Activated CD4-positive, alpha-beta memory T cell treated with anti-CD3 and anti-CD28 coated beads for 36 hours (primary cell): ENCODE measurements at regions of chr16 and their contacts with region 1.

Region 1: DNA sequence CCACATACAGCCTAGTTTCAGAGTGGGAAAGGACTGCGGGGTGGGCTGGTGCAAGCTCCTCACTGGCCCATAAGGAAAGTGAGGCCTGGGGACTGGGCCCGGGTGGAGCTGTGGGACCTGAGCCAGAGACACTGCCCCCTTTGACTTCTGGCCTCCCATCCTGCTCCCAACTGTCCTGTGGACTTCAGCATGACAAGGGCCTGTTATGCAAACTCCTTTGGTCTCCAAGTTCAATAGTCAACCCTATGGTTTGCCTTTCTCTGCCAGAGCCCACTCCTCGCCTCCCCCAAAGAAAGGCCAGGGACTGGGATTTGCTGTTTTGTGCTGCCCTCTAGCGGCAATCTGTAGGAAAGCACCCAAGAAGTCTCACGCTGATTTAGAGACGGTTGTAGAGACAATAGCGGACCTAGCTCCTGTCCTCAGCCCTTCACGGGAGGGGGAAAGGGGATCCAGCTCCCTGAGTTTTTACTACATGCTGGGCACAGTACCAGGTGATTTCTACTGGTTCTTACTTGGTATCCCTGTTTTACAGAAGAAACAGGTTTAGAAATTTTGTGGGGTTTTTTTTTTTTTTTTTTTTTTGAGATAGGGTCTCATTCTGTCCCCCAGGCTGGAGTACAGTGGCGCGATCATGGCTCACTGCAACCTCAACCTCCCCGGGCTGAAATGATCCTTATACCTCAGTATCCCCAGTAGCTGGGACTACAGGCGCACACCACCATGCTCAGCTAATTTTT is 1.2 kb upstream of the TLCD3B start:
- DNase-seq: peak; percentile 77
- H3K4me3 Mint-ChIP-seq: no peak overlapping the region
- H3K27ac Mint-ChIP-seq: no peak overlapping the region
- H3K4me1 Mint-ChIP-seq: peaks cover 23% of the 10 kb centered on the region
- H3K27me3 Mint-ChIP-seq: peaks cover 49% of the 10 kb centered on the region

Region 2: GRCh38 chr16:29900102-29900887 is 132.0 kb before region 1 on chr16 and contains the start of gene ASPHD1:
- CTCF ChIA-PET with region 1: interaction called, 12 read pairs
- POLR2A ChIA-PET with region 1: no interaction called
- intact Hi-C with region 1: no loop called
- DNase-seq: peak; percentile 71
- H3K4me3 Mint-ChIP-seq: peak within 1 kb of the TSS; percentile 77
- H3K27ac Mint-ChIP-seq: no peak within 1 kb of the TSS
- H3K4me1 Mint-ChIP-seq: peaks cover 8% of the 10 kb centered on the region
- H3K27me3 Mint-ChIP-seq: peaks cover 18% of the 10 kb centered on the region
- total RNA-seq, gene ASPHD1: 1.6 to 1.9 TPM

Region 3: GRCh38 chr16:29910819-29911675 is 121.2 kb before region 1 on chr16:
- CTCF ChIA-PET with region 1: no interaction called
- POLR2A ChIA-PET with region 1: no interaction called
- intact Hi-C with region 1: no loop called
- DNase-seq: no peak
- H3K4me3 Mint-ChIP-seq: no peak overlapping the region
- H3K27ac Mint-ChIP-seq: no peak overlapping the region
- H3K4me1 Mint-ChIP-seq: no peaks in the 10 kb centered on the region
- H3K27me3 Mint-ChIP-seq: no peaks in the 10 kb centered on the region

Region 4: DNA sequence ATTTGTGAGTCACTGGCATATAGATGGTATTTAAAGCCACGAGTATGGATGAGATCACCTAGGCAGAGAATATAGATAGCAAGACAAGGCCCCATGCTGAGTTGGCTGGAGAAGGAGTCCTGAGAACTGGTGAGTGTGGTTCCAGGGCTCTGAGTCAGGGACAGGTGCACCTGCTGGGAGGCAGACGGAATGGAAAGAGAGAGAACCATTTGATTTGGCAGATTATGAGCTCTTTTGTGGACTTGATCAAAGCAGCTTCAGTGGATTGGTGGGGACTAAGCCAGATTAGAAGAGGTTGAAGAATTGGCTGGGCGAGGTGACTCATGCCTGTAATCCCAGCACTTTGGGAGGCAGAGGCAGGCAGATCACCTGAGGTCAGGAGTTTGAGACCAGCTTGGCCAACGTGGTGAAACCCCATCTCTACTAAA is 13.5 kb before region 1 on chr16:
- CTCF ChIA-PET with region 1: interaction called, 25 read pairs
- POLR2A ChIA-PET with region 1: no interaction called
- intact Hi-C with region 1: no loop called
- DNase-seq: no peak
- H3K4me3 Mint-ChIP-seq: no peak overlapping the region
- H3K27ac Mint-ChIP-seq: no peak overlapping the region
- H3K4me1 Mint-ChIP-seq: peaks cover 4% of the 10 kb centered on the region
- H3K27me3 Mint-ChIP-seq: peaks cover 3% of the 10 kb centered on the region

Region 5: DNA sequence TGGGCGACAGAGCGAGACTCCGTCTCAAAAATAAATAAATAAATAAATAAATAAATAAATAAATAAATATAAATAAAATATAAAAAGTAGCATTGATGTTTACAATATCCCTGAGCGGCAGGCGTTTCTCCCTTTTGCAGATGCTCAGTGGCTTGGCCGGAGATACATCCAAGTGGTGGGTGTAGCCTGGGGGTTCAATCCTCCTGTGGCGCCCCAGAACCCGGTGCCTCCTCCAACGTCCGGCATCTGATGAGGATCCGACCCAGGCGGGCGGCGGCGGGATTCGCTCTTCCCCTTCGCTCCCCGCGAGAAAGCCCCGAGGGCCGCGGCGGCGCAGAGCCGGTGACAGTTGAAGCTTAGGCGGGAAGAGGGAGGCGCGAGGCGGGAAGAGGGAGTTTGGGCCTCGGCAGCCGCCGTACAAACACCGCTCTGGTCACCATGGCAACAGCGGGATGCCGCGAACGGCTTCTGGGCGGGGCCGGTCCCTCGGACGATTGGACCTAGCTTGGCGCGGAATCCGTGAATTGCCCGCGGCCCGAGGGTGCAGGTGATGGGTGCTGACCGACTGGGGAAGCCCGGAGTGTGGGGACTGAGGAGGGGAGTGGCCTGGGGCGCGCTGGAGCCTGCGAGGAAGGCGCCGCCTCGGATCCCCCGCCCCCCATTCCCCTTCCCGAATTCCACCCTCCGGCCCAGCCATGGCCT is 20.6 kb after region 1 on chr16:
- CTCF ChIA-PET with region 1: interaction called, 27 read pairs
- POLR2A ChIA-PET with region 1: interaction called, 3 read pairs
- intact Hi-C with region 1: no loop called
- DNase-seq: peak; percentile 95
- H3K4me3 Mint-ChIP-seq: peak overlapping the region; percentile 86
- H3K27ac Mint-ChIP-seq: peak overlapping the region; percentile 49
- H3K4me1 Mint-ChIP-seq: peaks cover 28% of the 10 kb centered on the region
- H3K27me3 Mint-ChIP-seq: no peaks in the 10 kb centered on the region

Region 6: DNA sequence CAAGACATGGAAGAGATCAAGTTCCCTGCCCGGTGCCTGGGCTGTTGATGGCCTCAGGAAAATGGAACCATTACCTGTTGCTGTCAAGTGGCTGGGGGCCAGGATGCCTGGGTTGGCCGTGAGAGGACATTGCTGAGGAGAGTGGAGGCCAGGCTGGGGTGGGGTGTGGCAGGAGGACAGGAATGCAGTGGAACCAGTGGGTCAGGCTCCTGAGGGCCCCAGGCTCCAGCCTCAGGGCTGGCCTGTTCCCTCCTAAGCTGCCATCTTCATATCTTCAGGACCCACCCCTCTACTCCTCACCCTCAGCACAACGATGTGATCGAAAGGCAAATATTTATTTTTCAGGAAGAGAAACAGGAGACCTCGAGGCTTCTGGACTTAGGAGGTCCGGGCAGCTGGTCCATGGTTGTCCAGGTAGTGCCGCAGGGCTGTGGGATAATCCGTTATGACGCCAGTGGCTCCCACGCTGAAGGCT is 72.3 kb after region 1 on chr16:
- CTCF ChIA-PET with region 1: no interaction called
- POLR2A ChIA-PET with region 1: no interaction called
- intact Hi-C with region 1: no loop called
- DNase-seq: no peak
- H3K4me3 Mint-ChIP-seq: no peak overlapping the region
- H3K27ac Mint-ChIP-seq: no peak overlapping the region
- H3K4me1 Mint-ChIP-seq: no peaks in the 10 kb centered on the region
- H3K27me3 Mint-ChIP-seq: no peaks in the 10 kb centered on the region

Region 7: GRCh38 chr16:30183233-30184095 is 151.2 kb after region 1 on chr16 and contains the start of gene CORO1A:
- CTCF ChIA-PET with region 1: no interaction called
- POLR2A ChIA-PET with region 1: no interaction called
- intact Hi-C with region 1: no loop called
- DNase-seq: peak; percentile 92
- H3K4me3 Mint-ChIP-seq: peak within 1 kb of the TSS; percentile 100
- H3K27ac Mint-ChIP-seq: peak within 1 kb of the TSS; percentile 100
- H3K4me1 Mint-ChIP-seq: peaks cover 24% of the 10 kb centered on the region
- H3K27me3 Mint-ChIP-seq: no peaks in the 10 kb centered on the region
- total RNA-seq, gene CORO1A: 1,027 to 1,051 TPM